ENCODE measurements at regions of chr12 and their contacts with region 1.

Region 1: GRCh38 chr12:9331218-9331626 is 123.0 kb upstream of the PZP start:
- H3K4me3 ChIP-seq: no peak overlapping the region
- H3K27ac ChIP-seq: no peak overlapping the region
- H3K4me1 ChIP-seq: no peaks in the 10 kb centered on the region
- CTCF ChIP-seq: peak; percentile 49

Region 2: GRCh38 chr12:9464408-9464807 is 133.2 kb after region 1 on chr12:
- CTCF ChIA-PET with region 1: interaction called, 14 read pairs
- POLR2A ChIA-PET with region 1: no interaction called
- H3K4me3 ChIP-seq: no peak overlapping the region
- H3K27ac ChIP-seq: no peak overlapping the region
- H3K4me1 ChIP-seq: no peaks in the 10 kb centered on the region
- CTCF ChIP-seq: no peak

Measured in HEK293 (cell line).